ENCODE measurements at regions of chr7 and their contacts with region 1.

Region 1: GRCh38 chr7:107150375-107151073 is 18.3 kb upstream of the HBP1 start:
- DNase-seq: peak; percentile 67 to 90
- ATAC-seq: peak; percentile 77 to 83 (median 79)
- H3K4me3 ChIP-seq: no peak overlapping the region
- H3K4me3 Mint-ChIP-seq: no peak overlapping the region
- H3K27ac ChIP-seq: no peak overlapping the region
- H3K27ac Mint-ChIP-seq: no peak overlapping the region
- H3K4me1 ChIP-seq: no peaks in the 10 kb centered on the region
- H3K4me1 Mint-ChIP-seq: no peaks in the 10 kb centered on the region
- H3K27me3 ChIP-seq: no peaks in the 10 kb centered on the region
- H3K27me3 Mint-ChIP-seq: peaks cover 2 to 7% of the 10 kb centered on the region in 2 donors
- CTCF ChIP-seq: peak; percentile 91

Region 2: DNA sequence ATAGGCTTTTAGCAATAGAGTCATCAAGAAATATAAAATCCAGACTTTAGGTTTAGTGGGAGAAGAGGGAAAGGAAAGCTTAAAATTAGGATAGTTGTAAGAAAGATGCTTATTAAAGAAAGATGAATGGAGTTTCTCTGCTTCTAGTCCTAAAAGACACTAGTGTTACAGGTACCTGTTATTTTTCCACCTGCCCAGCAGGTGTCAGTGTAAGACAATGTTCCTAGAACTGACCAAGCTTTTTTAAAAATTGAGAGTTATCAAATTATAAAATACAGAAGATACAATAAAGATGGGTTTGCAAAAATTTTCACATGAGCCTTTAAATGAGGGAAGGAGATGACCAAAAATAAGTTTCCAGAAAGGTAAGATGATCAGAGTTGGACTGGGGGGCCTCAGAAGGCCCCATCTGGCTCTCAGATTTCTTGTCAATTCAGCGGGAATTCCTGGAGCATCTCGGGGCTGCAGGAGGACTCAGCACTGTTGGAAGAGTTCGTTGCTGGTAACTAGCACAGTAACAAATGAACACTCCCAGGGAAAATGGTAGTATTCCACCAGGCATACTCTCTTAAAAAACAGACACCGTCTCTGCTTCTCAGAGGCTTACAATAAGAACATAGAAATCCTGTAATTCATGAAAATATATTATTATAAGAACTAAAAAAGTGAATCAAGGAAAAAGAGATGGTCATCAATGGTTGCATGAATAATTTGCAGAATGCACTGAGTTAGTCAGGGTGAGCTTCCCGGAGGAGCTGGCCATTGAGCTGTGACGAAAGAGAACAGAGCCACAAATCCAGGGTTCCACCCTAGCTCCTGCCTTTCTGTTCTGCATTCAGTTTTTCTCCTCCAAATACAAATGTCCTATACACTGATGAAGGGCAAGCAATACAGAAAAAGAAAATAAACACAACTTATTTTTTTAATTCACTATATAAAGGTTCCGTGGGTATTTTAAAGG is 357.2 kb before region 1 on chr7:
- intact Hi-C with region 1: loop called (anchors 1 kb)
- DNase-seq: peak in 1 of 2 donors; percentile 82
- ATAC-seq: peak; percentile 57 to 73 (median 69)
- H3K4me3 ChIP-seq: no peak overlapping the region
- H3K4me3 Mint-ChIP-seq: no peak overlapping the region
- H3K27ac ChIP-seq: no peak overlapping the region
- H3K27ac Mint-ChIP-seq: no peak overlapping the region
- H3K4me1 ChIP-seq: no peaks in the 10 kb centered on the region
- H3K4me1 Mint-ChIP-seq: no peaks in the 10 kb centered on the region
- H3K27me3 ChIP-seq: no peaks in the 10 kb centered on the region
- H3K27me3 Mint-ChIP-seq: peaks cover 0 to 8% of the 10 kb centered on the region in 2 donors
- CTCF ChIP-seq: peak; percentile 85

Region 3: GRCh38 chr7:106947244-106947728 is 203.2 kb before region 1 on chr7:
- intact Hi-C with region 1: loop called (anchors 2 kb)
- DNase-seq: peak in 1 of 2 donors; percentile 66
- ATAC-seq: peak; percentile 48 to 73 (median 72)
- H3K4me3 ChIP-seq: no peak overlapping the region
- H3K4me3 Mint-ChIP-seq: no peak overlapping the region
- H3K27ac ChIP-seq: no peak overlapping the region
- H3K27ac Mint-ChIP-seq: no peak overlapping the region
- H3K4me1 ChIP-seq: no peaks in the 10 kb centered on the region
- H3K4me1 Mint-ChIP-seq: no peaks in the 10 kb centered on the region
- H3K27me3 ChIP-seq: no peaks in the 10 kb centered on the region
- H3K27me3 Mint-ChIP-seq: peaks cover 0 to 12% of the 10 kb centered on the region in 2 donors
- CTCF ChIP-seq: peak; percentile 44

Region 4: DNA sequence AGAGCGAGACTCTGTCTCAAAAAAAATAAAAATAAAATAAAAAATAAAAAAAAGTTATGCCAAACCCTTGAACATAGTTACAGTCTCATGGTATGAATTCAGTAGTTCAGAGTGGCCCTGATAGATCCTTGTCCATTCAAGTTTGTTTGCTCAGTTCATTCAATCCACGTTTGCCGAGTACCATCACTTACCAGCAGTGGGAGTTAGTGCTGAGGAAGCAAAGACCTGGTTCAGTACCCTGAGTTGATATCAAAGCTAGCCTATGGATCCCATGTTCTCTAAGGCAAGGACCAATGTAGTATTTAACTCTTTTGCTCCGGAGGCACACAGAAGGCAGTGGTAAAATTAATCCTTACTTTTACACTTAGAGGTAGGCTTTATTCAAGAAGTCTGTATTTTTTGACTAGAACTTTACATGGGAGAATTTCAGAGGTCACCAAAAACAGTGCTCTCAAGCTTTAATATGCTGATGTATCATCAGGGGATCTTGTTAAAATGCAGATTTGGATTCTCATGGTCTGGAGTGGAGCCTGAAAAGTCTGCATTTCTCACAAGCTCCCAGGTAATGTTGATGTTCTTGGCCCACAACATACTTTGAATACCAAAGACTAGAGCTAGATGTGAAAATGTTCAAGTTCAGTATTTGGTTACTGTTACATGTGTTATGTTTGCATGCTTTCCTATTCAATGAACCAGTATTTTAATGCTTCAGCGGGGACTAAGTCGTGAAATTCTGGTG is 19.9 kb before region 1 on chr7:
- intact Hi-C with region 1: no loop called
- DNase-seq: no peak
- ATAC-seq: no peak
- H3K4me3 ChIP-seq: no peak overlapping the region
- H3K4me3 Mint-ChIP-seq: no peak overlapping the region
- H3K27ac ChIP-seq: no peak overlapping the region
- H3K27ac Mint-ChIP-seq: no peak overlapping the region
- H3K4me1 ChIP-seq: peaks cover 13% of the 10 kb centered on the region
- H3K4me1 Mint-ChIP-seq: peaks cover 14% of the 10 kb centered on the region in 2 donors
- H3K27me3 ChIP-seq: no peaks in the 10 kb centered on the region
- H3K27me3 Mint-ChIP-seq: peaks cover 0 to 3% of the 10 kb centered on the region in 2 donors
- CTCF ChIP-seq: no peak

Region 5: GRCh38 chr7:107318523-107319160 is 168.1 kb after region 1 on chr7:
- intact Hi-C with region 1: no loop called
- DNase-seq: no peak
- ATAC-seq: no peak
- H3K4me3 ChIP-seq: no peak overlapping the region
- H3K4me3 Mint-ChIP-seq: no peak overlapping the region
- H3K27ac ChIP-seq: no peak overlapping the region
- H3K27ac Mint-ChIP-seq: no peak overlapping the region
- H3K4me1 ChIP-seq: no peaks in the 10 kb centered on the region
- H3K4me1 Mint-ChIP-seq: peaks cover 6 to 8% of the 10 kb centered on the region in 2 donors
- H3K27me3 ChIP-seq: no peaks in the 10 kb centered on the region
- H3K27me3 Mint-ChIP-seq: no peaks in the 10 kb centered on the region
- CTCF ChIP-seq: no peak

Region 6: DNA sequence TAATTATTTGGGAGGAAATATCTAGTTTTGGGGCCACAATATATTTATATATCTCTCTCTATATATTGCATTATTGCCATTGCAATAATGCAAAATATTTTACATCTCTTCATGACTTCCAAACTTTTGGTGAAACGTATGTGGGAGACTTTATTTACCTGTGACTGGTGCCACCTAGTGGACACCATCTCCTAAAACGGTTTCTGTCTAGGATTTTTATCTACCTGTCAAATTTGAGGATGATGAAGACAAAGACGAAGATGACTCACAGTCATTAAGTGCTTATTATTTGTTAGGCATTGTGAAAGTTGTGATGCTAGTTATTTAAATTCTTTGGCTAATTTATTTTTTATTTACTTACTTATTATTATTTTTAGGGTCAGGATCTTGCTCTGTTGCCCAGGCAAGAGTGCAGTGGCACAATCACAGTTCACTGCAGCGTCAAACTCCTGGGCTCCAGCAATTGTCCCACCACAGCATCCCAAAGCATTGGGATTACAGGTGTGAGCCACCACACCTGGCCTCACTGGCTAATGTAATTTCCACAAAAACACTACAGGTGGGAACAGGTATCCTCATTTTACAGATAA is 574.7 kb after region 1 on chr7:
- intact Hi-C with region 1: loop called (anchors 5 kb)
- DNase-seq: peak in 1 of 2 donors; percentile 83
- ATAC-seq: peak in 1 of 3 donors; percentile 45
- H3K4me3 ChIP-seq: no peak overlapping the region
- H3K4me3 Mint-ChIP-seq: no peak overlapping the region
- H3K27ac ChIP-seq: no peak overlapping the region
- H3K27ac Mint-ChIP-seq: no peak overlapping the region
- H3K4me1 ChIP-seq: no peaks in the 10 kb centered on the region
- H3K4me1 Mint-ChIP-seq: no peaks in the 10 kb centered on the region
- H3K27me3 ChIP-seq: no peaks in the 10 kb centered on the region
- H3K27me3 Mint-ChIP-seq: peaks cover 16 to 19% of the 10 kb centered on the region in 2 donors
- CTCF ChIP-seq: peak; percentile 72

Region 7: GRCh38 chr7:107879400-107880035 is 729.0 kb after region 1 on chr7:
- intact Hi-C with region 1: loop called (anchors 5 kb)
- DNase-seq: peak in 1 of 2 donors; percentile 73
- ATAC-seq: peak; percentile 79 to 84 (median 83)
- H3K4me3 ChIP-seq: no peak overlapping the region
- H3K4me3 Mint-ChIP-seq: no peak overlapping the region
- H3K27ac ChIP-seq: no peak overlapping the region
- H3K27ac Mint-ChIP-seq: no peak overlapping the region
- H3K4me1 ChIP-seq: no peaks in the 10 kb centered on the region
- H3K4me1 Mint-ChIP-seq: peaks cover 0 to 2% of the 10 kb centered on the region in 2 donors
- H3K27me3 ChIP-seq: no peaks in the 10 kb centered on the region
- H3K27me3 Mint-ChIP-seq: peaks cover 18 to 32% of the 10 kb centered on the region in 2 donors
- CTCF ChIP-seq: peak; percentile 78